ENCODE measurements at regions of chr9 and their contacts with region 1.

Region 1: GRCh38 chr9:127578955-127579853 is 32.9 kb upstream of the STXBP1 start:
- H3K4me3 ChIP-seq: no peak overlapping the region
- H3K27ac ChIP-seq: no peak overlapping the region
- H3K4me1 ChIP-seq: peaks cover 6% of the 10 kb centered on the region; the same call in 1 of the 2 replicates
- CTCF ChIP-seq: no peak

Region 2: DNA sequence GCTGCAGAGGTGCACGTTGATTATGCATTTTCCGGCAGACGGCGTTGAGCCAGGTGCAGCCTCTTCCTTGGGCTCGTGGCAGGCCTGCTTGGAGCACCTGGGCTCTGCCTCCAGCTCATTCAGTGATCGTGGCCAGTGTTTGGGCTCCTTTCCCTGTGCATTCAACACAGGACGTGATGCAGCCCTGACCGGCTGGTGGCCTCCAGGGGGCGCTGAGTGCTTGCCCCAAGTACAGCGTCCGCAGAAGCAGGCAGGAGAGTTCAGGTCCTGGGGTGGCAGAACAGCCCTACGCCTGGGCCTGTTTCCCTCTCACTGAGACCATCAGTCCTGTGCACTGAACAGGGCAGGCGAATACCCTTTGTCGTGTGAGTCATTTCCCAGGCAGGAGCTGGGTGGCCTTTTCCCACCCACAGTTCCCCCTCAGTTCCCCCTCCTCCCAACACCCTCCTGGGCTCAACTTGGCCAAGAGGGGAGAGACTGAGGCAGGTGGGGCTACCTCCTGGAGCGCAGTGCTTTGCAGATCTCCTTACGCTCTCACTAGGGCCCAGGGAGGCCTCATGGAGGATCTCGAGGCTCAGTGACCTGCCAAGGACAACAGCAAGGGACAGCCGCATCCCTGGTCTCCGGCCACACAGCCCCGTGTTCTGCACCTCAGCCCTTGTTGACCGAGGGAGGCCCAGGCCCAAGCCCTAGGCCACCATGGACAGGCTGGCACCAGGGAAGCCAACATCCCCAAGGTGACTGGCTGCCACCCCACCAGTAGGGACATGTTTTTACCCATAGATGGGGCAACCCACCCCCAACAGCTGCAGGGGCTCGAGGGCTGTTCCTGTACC is 75.0 kb before region 1 on chr9:
- CTCF ChIA-PET with region 1: interaction called, 120 read pairs
- POLR2A ChIA-PET with region 1: no interaction called
- H3K4me3 ChIP-seq: no peak overlapping the region
- H3K27ac ChIP-seq: no peak overlapping the region
- H3K4me1 ChIP-seq: no peaks in the 10 kb centered on the region
- CTCF ChIP-seq: peak; percentile 79

Region 3: DNA sequence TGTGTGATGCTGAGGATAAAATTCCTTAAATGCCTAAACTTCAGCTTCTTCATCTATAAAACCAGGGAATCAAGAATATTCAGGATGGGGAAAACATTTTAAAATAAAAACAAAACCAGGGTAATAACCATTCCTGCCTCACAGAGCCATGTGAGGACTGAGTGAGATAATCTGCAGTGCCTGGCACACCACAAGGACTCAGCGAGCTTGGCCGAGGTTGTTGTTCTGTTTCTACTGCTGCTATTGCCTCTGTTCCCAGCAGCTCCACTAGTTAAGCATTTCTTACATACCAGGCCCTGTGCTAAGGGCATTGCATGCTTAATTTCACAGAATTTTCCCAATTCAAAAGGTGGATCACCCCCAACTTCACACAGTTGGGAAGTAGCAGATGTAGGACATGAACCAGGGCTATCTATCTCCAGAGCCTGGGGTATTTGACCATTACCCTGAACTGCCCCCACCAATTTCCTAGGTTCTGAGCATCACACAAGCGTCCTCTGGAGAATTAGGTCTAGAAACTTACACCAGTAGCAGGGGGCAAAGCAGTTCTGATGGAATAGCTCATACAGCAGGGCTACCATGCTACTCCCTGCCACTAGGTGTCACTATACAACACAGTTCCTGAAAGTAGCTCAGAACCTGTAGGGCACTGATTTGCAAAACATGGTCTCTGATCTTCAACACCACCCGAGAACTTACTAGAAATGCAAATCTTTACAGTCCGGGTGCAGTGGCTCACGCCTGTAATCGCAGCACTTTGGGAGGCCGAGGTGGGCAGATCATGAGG is 53.6 kb before region 1 on chr9:
- CTCF ChIA-PET with region 1: interaction called, 19 read pairs
- POLR2A ChIA-PET with region 1: no interaction called
- H3K4me3 ChIP-seq: no peak overlapping the region
- H3K27ac ChIP-seq: no peak overlapping the region
- H3K4me1 ChIP-seq: no peaks in the 10 kb centered on the region
- CTCF ChIP-seq: no peak